Caco-2 (cell line): ENCODE measurements at regions of chr7 and their contacts with region 1.

Region 1: DNA sequence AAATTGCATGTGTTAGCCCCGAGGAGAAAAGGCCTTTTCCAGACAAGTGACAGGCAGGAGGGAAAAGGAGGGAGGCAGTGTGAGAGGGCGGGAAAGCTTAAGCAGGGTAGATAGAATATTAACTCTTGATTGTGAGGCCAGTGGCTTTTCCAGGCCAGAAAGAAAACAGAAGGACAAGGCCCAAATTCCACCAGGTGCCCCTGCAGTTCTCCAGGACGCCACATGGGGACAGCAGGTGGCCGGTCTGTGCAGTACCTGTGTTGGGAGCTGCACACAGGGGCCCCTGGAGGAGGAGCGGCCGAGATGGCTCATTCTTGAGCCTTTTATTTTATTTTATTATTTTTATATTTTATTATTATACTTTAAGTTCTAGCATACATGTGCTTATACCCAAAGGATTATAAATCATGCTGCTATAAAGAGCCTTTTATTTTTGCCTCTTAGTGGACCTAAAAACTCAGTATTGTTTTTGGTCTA is 141.3 kb upstream of the KLF14 start:
- DNase-seq: peak; percentile 75 to 86
- H3K4me3 ChIP-seq: no peak overlapping the region
- H3K4me3 Mint-ChIP-seq: no peak overlapping the region
- H3K27ac Mint-ChIP-seq: no peak overlapping the region
- H3K4me1 ChIP-seq: no peaks in the 10 kb centered on the region
- H3K4me1 Mint-ChIP-seq: no peaks in the 10 kb centered on the region
- H3K27me3 ChIP-seq: no peaks in the 10 kb centered on the region
- H3K27me3 Mint-ChIP-seq: no peaks in the 10 kb centered on the region
- CTCF ChIP-seq: peak; percentile 90 to 98

Region 2: DNA sequence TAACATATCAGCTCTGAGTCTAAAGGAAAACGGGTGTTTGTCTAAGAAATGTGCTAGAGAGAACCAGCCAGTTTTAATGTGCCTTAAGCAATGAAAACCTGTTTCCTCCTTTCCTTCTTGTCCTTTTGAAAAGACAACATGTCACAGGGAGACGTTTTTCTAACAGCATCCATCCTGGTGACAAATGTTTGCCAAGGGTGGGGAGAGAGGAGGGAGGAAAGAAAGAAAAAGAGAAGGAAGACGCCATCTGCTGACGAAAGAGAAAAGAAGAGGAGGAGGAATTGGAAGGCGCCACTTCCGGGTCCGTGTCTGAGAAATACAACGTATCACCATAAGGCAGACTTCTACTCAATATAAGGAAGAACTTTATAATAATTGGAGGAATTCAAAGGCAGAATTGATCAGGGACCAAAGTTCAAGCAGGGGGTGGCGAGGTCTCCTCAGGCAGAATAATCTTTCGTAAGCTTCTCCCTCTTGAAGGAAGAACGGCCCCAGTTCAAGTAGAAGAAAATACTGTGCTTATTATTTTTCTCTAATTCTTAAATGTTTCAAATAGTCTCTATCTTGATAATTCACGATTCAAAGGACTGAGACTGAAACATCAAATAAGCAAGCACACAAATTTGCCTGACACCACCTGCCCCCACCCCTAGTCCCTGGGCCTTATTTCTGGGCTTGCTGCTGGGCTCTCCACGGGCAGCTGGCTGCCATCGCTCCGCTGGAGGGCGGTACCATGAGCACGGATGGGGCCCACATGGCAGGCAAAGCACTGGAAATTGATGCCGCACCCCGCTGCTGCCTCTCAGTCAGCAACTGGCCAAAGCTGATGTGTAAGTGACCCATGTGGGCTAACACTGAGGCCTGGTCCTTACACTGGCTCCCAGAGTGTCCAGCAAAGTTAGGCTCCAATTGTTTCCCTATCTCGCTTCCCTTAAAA is 132.4 kb after region 1 on chr7:
- CTCF ChIA-PET with region 1: no interaction called
- POLR2A ChIA-PET with region 1: no interaction called
- intact Hi-C with region 1: loop called (anchors 1 kb)
- DNase-seq: peak; percentile 80 to 81
- H3K4me3 ChIP-seq: no peak overlapping the region
- H3K4me3 Mint-ChIP-seq: no peak overlapping the region
- H3K27ac Mint-ChIP-seq: peak overlapping the region; percentile 18
- H3K4me1 ChIP-seq: peaks cover 8% of the 10 kb centered on the region; the same call in 1 of the 2 replicates
- H3K4me1 Mint-ChIP-seq: no peaks in the 10 kb centered on the region
- H3K27me3 ChIP-seq: no peaks in the 10 kb centered on the region
- H3K27me3 Mint-ChIP-seq: no peaks in the 10 kb centered on the region
- CTCF ChIP-seq: peak; percentile 53 to 57

Region 3: DNA sequence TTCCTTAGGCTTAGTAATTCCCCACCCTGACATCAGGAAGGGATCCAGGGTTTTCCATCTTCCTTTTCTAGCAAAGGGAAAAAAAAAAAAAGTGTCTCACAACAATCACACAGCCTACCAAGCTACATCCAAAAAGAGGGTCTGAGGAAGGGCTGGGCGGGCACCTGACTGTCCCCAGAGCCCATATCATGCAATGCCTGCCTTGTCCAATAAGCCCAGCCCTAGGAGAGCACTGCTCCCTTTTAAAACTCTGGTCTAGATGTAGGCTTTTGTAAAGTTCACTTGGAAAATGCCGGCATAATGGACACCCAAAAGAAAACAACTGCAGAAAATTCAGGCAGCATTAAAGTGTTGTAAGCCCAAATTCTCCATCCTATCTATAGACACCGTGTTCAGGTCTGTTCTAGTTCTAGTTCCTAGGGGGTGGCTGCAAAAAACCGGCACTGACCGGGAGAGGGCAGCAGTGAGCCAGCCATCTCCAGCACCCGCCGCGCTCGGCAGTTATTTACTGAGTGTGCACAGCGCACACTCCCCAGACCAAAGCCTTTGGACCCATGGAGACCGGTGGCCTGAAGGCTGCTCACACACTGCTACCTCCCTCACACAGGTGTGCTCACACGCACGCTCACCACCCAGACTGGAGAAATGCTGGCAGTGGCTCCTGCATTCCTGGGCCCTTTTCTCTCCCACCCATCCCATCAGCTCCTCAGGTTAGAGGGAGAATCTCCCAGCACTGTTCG is 632.5 kb after region 1 on chr7:
- CTCF ChIA-PET with region 1: no interaction called
- POLR2A ChIA-PET with region 1: no interaction called
- intact Hi-C with region 1: loop called (anchors 5 kb)
- DNase-seq: peak; percentile 77 to 84
- H3K4me3 ChIP-seq: no peak overlapping the region
- H3K4me3 Mint-ChIP-seq: no peak overlapping the region
- H3K27ac Mint-ChIP-seq: peak overlapping the region; percentile 27
- H3K4me1 ChIP-seq: 0 out of 2 replicates have a peak, but pooled peaks cover 3% of the 10 kb centered on the region
- H3K4me1 Mint-ChIP-seq: peaks cover 30% of the 10 kb centered on the region
- H3K27me3 ChIP-seq: no peaks in the 10 kb centered on the region
- H3K27me3 Mint-ChIP-seq: no peaks in the 10 kb centered on the region
- CTCF ChIP-seq: peak; percentile 79 to 94